PC-9 (cell line): ENCODE measurements at regions of chr16 and their contacts with region 1.

Region 1: DNA sequence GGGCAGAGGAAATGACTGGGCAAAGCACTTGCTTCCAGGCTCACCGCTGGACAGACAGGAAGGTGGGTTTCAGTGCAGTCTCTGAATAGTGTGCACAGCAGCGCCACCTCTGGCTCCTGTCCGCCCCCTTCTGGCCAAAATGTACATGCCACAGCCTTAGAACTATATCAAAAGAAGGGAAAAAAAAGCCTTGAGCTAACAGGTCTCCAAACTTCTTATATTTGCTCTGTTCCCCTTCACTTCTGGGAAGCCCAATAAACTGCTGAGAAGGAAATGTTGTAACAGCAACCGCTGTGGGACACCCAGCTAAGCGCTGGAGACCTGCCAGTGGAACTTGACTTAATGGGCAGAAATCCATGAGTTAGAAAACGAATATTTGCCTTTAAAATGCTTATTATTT is 17.5 kb downstream of the COG7 start:
- DNase-seq: peak; percentile 55 to 67
- H3K4me3 ChIP-seq: no peak overlapping the region
- H3K27ac ChIP-seq: no peak overlapping the region
- H3K4me1 ChIP-seq: peaks cover 3% of the 10 kb centered on the region; the same call in 1 of the 2 replicates
- H3K27me3 ChIP-seq: no peaks in the 10 kb centered on the region
- CTCF ChIP-seq: peak; percentile 90

Region 2: GRCh38 chr16:23060458-23061320 is 374.8 kb before region 1 on chr16:
- CTCF ChIA-PET with region 1: no interaction called
- POLR2A ChIA-PET with region 1: no interaction called
- intact Hi-C with region 1: loop called (anchors 2 kb)
- DNase-seq: peak; percentile 66 to 67
- H3K4me3 ChIP-seq: no peak overlapping the region
- H3K27ac ChIP-seq: no peak overlapping the region
- H3K4me1 ChIP-seq: no peaks in the 10 kb centered on the region
- H3K27me3 ChIP-seq: no peaks in the 10 kb centered on the region; the same call in 1 of the 2 replicates
- CTCF ChIP-seq: peak; percentile 85

Region 3: DNA sequence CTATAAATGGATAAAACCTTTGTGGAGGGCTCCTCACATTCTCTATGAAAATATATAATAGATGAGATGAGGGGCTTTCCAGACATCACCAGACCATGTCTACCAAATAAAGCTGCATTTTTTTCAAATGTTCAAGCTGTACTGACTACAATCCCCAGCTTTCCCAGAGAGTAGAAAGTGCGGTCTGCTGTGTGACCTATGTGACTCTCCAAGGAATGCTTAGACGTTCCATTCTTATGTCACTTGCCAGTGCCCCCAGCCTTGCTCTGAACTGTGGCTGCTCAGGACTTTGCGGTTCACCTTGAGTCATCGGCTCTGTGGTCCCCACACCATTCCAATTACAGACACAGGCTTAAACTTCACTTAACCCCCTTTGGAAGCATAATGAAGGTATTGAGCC is 181.2 kb before region 1 on chr16:
- CTCF ChIA-PET with region 1: interaction called, 11 read pairs
- POLR2A ChIA-PET with region 1: no interaction called
- intact Hi-C with region 1: no loop called
- DNase-seq: peak; percentile 83 to 93
- H3K4me3 ChIP-seq: no peak overlapping the region
- H3K27ac ChIP-seq: peak overlapping the region; percentile 63
- H3K4me1 ChIP-seq: peaks cover 56% of the 10 kb centered on the region
- H3K27me3 ChIP-seq: no peaks in the 10 kb centered on the region
- CTCF ChIP-seq: no peak

Region 4: GRCh38 chr16:23310217-23310616 is 125.3 kb before region 1 on chr16:
- CTCF ChIA-PET with region 1: interaction called, 20 read pairs
- POLR2A ChIA-PET with region 1: no interaction called
- intact Hi-C with region 1: no loop called
- DNase-seq: no peak
- H3K4me3 ChIP-seq: no peak overlapping the region
- H3K27ac ChIP-seq: no peak overlapping the region
- H3K4me1 ChIP-seq: no peaks in the 10 kb centered on the region
- H3K27me3 ChIP-seq: no peaks in the 10 kb centered on the region
- CTCF ChIP-seq: no peak

Region 5: GRCh38 chr16:23478566-23479537 is 43.4 kb after region 1 on chr16:
- CTCF ChIA-PET with region 1: no interaction called
- POLR2A ChIA-PET with region 1: no interaction called
- intact Hi-C with region 1: no loop called
- DNase-seq: no peak
- H3K4me3 ChIP-seq: no peak overlapping the region
- H3K27ac ChIP-seq: no peak overlapping the region
- H3K4me1 ChIP-seq: no peaks in the 10 kb centered on the region
- H3K27me3 ChIP-seq: no peaks in the 10 kb centered on the region
- CTCF ChIP-seq: no peak

Region 6: DNA sequence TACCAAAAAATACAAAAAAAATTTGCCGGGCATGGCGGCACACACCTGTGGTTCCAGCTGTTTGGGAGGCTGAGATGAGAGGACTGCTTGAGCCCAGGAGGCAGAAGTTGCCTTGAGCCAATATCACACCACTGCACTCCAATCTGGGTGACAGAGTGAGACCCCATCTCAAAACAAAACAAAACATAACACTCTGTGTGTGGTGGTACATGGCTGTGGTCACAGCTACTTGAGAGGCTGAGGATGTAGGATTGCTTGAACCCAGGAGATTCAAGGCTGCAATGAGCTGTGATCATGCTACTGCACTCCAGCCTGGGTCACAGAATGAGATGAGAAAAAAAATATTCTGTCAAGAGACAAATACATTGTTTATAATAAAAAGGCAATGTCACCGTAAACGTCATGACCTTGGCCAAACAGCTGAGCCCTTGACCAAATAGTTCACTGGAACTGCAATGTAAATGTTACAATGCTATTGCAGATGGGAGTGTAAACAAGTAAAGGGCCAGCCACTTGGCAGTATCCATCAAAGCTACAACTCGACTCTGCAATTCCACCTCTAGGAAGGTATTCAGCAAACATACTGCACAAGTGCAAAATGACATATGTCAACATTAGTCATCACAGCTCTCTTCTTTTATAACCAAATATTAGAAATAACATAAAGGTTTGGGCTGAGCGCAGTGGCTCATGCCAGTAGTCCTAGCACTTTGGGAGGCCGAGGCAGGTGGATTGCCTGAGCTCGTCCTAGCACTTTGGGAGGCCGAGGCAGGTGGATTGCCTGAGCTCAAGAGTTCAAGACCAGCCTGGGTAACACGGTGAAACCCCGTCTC is 104.7 kb after region 1 on chr16:
- CTCF ChIA-PET with region 1: interaction called, 10 read pairs
- POLR2A ChIA-PET with region 1: no interaction called
- intact Hi-C with region 1: no loop called
- DNase-seq: no peak
- H3K4me3 ChIP-seq: no peak overlapping the region
- H3K27ac ChIP-seq: peak overlapping the region; percentile 75; the same call in 1 of the 2 replicates
- H3K4me1 ChIP-seq: peaks cover 18% of the 10 kb centered on the region
- H3K27me3 ChIP-seq: no peaks in the 10 kb centered on the region
- CTCF ChIP-seq: no peak

Region 7: DNA sequence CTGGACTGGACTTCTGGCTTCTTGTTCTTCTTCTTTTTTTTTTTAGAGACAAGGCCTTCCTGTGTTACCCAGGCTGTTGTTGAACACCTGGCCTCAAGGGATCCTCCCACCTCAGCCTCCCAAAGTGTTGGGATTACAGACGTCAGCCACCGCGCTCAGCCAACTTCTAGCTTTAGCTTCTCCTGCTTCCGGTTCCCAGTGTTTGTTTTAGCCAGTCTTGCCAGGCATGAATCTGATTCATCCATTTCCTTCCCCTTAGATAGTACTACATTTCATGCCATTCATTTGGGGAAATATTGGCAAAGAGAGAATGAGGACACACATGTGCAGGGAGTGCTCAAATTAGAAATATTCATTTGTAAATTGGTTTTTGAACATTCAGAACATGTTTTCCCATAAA is 172.7 kb after region 1 on chr16:
- CTCF ChIA-PET with region 1: no interaction called
- POLR2A ChIA-PET with region 1: no interaction called
- intact Hi-C with region 1: no loop called
- DNase-seq: no peak
- H3K4me3 ChIP-seq: no peak overlapping the region
- H3K27ac ChIP-seq: no peak overlapping the region
- H3K4me1 ChIP-seq: no peaks in the 10 kb centered on the region
- H3K27me3 ChIP-seq: no peaks in the 10 kb centered on the region
- CTCF ChIP-seq: no peak

Region 8: GRCh38 chr16:23670137-23670776 is 234.8 kb after region 1 on chr16:
- CTCF ChIA-PET with region 1: no interaction called
- POLR2A ChIA-PET with region 1: no interaction called
- intact Hi-C with region 1: no loop called
- DNase-seq: peak; percentile 37 to 74
- H3K4me3 ChIP-seq: no peak overlapping the region
- H3K27ac ChIP-seq: 0 out of 2 replicates have a peak overlapping the region, but pooled peaks have one; percentile 19
- H3K4me1 ChIP-seq: peaks cover 21% of the 10 kb centered on the region
- H3K27me3 ChIP-seq: no peaks in the 10 kb centered on the region
- CTCF ChIP-seq: no peak

Region 9: DNA sequence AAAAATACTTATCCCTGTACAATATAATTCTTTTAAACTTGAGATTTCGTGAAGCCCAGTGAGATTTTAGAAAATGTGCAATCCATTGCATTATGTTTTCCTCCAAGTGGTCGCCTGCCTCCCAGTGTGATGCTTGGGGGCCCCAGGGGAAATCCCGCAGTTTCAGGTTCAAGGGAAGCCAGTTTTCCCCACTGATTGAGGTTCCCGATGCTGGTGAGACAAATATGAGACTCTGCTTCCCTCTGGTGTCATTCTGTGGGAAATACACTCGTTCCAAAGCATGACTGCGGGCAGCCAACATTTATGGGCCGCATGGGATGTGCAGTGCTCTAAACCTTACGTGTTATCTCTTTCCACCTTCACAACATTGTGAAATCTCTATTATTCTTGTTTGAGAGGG is 601.1 kb after region 1 on chr16:
- CTCF ChIA-PET with region 1: no interaction called
- POLR2A ChIA-PET with region 1: no interaction called
- intact Hi-C with region 1: loop called (anchors 1 kb)
- DNase-seq: peak in 1 of 2 experiments; percentile 30
- H3K4me3 ChIP-seq: no peak overlapping the region
- H3K27ac ChIP-seq: no peak overlapping the region
- H3K4me1 ChIP-seq: no peaks in the 10 kb centered on the region
- H3K27me3 ChIP-seq: peaks cover 34% of the 10 kb centered on the region; the same call in 1 of the 2 replicates
- CTCF ChIP-seq: peak; percentile 74